ENCODE measurements at regions of chr13 and their contacts with region 1.

Region 1: DNA sequence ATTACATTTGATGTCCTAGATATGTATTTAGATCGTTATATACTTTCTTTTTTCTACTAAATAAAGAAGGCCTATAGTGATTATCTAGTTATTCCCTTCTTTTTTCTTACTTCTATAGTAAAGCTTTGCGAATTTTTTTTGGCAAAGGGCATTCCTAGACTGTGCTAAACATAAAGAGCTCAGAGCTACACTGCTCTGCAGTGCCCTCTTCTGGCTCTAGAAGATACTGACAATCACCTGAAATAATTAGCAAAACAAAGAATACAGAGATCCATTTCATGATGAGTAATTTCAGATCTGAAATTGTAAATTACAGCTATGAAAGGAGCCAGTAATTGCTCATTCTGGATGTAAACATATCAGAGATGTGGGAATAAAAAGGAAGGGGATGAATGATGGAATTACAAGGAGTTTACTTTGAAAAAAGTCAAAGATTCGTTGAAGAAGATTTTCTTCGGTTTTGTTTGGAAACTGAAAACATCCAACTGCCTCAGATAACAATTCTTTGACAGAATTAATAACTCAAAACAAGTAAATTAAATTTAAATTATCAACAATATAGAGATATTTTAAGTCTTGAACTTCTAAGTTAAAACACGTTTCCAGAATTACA is 288.5 kb downstream of the NALCN start:
- DNase-seq: no peak
- H3K4me3 ChIP-seq: no peak overlapping the region
- H3K27ac ChIP-seq: no peak overlapping the region
- H3K4me1 ChIP-seq: no peaks in the 10 kb centered on the region
- H3K27me3 ChIP-seq: no peaks in the 10 kb centered on the region
- CTCF ChIP-seq: peak in 5 of 6 experiments; percentile 56 to 72 (median 60)
- POLR2A ChIP-seq: no peak

Region 2: DNA sequence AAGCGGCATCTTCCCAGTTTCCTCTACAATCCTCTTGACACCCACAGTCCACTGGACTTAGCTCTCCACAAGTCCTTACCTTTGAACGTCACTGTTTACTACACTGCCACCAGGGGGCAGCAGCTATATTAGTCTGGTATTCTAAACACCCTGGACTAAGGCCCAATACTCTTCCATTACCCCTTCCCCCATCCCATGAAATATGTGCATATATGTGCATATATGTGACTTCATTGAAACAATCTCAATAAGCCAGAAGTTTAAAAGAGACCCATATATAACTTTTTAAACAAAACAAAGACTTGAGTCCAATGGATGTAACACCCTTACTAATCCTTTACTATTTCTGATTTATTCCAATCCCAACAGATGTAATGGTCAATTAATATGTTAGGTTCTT is 554.7 kb before region 1 on chr13:
- intact Hi-C with region 1: loop called (anchors 10 kb)
- DNase-seq: peak; percentile 12
- H3K4me3 ChIP-seq: no peak overlapping the region
- H3K27ac ChIP-seq: no peak overlapping the region
- H3K4me1 ChIP-seq: no peaks in the 10 kb centered on the region
- H3K27me3 ChIP-seq: no peaks in the 10 kb centered on the region
- CTCF ChIP-seq: peak; percentile 63 to 76 (median 70)
- POLR2A ChIP-seq: no peak

Measured in esophagus squamous epithelium (tissue), 5 donors.